ENCODE measurements at regions of chr2 and their contacts with region 1.

Region 1: GRCh38 chr2:224982910-224983711 is 59.2 kb downstream of the DOCK10 start:
- DNase-seq: peak; percentile 54
- ATAC-seq: peak; percentile 53
- H3K4me3 Mint-ChIP-seq: peak overlapping the region; percentile 81
- H3K27ac Mint-ChIP-seq: peak overlapping the region; percentile 94
- H3K4me1 Mint-ChIP-seq: peaks cover 70% of the 10 kb centered on the region
- H3K27me3 Mint-ChIP-seq: no peaks in the 10 kb centered on the region

Region 2: GRCh38 chr2:224946895-224947294 is 36.2 kb before region 1 on chr2:
- POLR2A ChIA-PET with region 1: interaction called, 12 read pairs
- DNase-seq: no peak
- ATAC-seq: peak; percentile 62
- H3K4me3 Mint-ChIP-seq: peak overlapping the region; percentile 96
- H3K27ac Mint-ChIP-seq: peak overlapping the region; percentile 98
- H3K4me1 Mint-ChIP-seq: peaks cover 49% of the 10 kb centered on the region
- H3K27me3 Mint-ChIP-seq: no peaks in the 10 kb centered on the region

Region 3: GRCh38 chr2:224952936-224953657 is 30.0 kb before region 1 on chr2:
- POLR2A ChIA-PET with region 1: interaction called, 12 read pairs
- DNase-seq: no peak
- ATAC-seq: peak; percentile 95
- H3K4me3 Mint-ChIP-seq: peak overlapping the region; percentile 74
- H3K27ac Mint-ChIP-seq: peak overlapping the region; percentile 91
- H3K4me1 Mint-ChIP-seq: peaks cover 76% of the 10 kb centered on the region
- H3K27me3 Mint-ChIP-seq: no peaks in the 10 kb centered on the region